ENCODE measurements at regions of chr9 and their contacts with region 1.

Region 1: GRCh38 chr9:5425006-5425628 is 12.6 kb downstream of the PLGRKT start:
- DNase-seq: peak in 3 of 14 experiments; percentile 61 to 67 (median 66)
- ATAC-seq: peak; percentile 74
- H3K4me3 ChIP-seq: no peak overlapping the region
- H3K4me3 Mint-ChIP-seq: no peak overlapping the region
- H3K27ac ChIP-seq: no peak overlapping the region
- H3K27ac Mint-ChIP-seq: no peak overlapping the region
- H3K4me1 ChIP-seq: no peaks in the 10 kb centered on the region
- H3K4me1 Mint-ChIP-seq: peaks cover 5% of the 10 kb centered on the region
- H3K27me3 ChIP-seq: no peaks in the 10 kb centered on the region
- H3K27me3 Mint-ChIP-seq: no peaks in the 10 kb centered on the region
- CTCF ChIP-seq: peak; percentile 79

Region 2: DNA sequence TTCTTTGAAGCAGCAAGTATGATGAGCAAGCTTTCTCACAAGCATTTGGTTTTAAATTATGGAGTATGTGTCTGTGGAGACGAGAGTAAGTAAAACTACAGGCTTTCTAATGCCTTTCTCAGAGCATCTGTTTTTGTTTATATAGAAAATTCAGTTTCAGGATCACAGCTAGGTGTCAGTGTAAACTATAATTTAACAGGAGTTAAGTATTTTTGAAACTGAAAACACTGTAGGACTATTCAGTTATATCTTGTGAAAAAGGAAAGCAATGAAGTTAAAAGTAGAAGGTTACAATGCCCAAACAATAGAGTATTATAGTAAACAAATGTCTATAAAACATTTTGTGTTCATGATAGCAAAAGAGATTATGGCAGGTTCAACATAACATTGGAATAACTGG is 351.4 kb before region 1 on chr9:
- CTCF ChIA-PET with region 1: no interaction called
- POLR2A ChIA-PET with region 1: no interaction called
- intact Hi-C with region 1: loop called in 1 of 2 experiments (anchors 10 kb)
- DNase-seq: no peak
- ATAC-seq: no peak
- H3K4me3 ChIP-seq: no peak overlapping the region
- H3K4me3 Mint-ChIP-seq: no peak overlapping the region
- H3K27ac ChIP-seq: no peak overlapping the region
- H3K27ac Mint-ChIP-seq: no peak overlapping the region
- H3K4me1 ChIP-seq: no peaks in the 10 kb centered on the region
- H3K4me1 Mint-ChIP-seq: no peaks in the 10 kb centered on the region
- H3K27me3 ChIP-seq: no peaks in the 10 kb centered on the region
- H3K27me3 Mint-ChIP-seq: no peaks in the 10 kb centered on the region
- CTCF ChIP-seq: no peak

Region 3: DNA sequence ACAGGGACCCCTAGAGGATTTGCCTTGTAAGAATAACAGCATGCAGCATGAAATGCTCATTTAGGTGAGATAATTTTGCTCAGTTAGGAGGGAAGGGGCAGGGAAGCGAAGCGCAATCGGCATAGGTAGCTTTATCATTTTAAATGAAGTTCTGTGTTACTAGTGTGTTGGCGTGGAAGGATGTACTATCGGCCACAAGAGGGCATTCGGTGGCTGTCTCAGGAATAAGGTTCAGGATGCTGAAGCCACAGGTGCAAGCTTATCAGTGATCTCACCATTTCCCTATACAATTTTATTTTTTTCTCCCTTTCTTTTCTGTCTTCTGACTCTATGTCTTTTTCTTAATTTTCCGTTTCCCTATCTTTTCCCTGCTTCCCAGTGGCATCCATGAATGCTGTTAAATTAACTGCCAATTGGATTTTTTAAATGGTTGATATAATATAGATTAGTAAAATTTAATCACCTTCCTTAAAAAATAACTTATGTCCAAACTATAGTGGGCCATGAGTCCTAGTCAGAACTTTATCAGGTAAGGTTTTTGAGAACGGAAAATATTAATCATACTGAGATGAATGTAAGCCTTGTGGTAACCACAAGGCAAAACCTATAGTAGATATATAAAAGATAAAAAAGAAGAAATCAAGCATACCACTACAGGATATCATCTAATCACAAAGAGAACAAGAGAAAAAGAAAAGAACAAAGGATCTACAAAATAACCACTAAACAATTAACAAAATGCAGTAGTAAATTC is 238.5 kb before region 1 on chr9:
- CTCF ChIA-PET with region 1: interaction called, 10 read pairs
- POLR2A ChIA-PET with region 1: interaction called, 3 read pairs
- intact Hi-C with region 1: loop called (anchors 1 kb)
- DNase-seq: peak; percentile 39 to 86 (median 54)
- ATAC-seq: peak; percentile 96
- H3K4me3 ChIP-seq: no peak overlapping the region
- H3K4me3 Mint-ChIP-seq: no peak overlapping the region
- H3K27ac ChIP-seq: no peak overlapping the region
- H3K27ac Mint-ChIP-seq: no peak overlapping the region
- H3K4me1 ChIP-seq: peaks cover 5% of the 10 kb centered on the region
- H3K4me1 Mint-ChIP-seq: peaks cover 12% of the 10 kb centered on the region
- H3K27me3 ChIP-seq: no peaks in the 10 kb centered on the region
- H3K27me3 Mint-ChIP-seq: no peaks in the 10 kb centered on the region
- CTCF ChIP-seq: peak; percentile 83

Measured in CD4-positive, alpha-beta T cell (primary cell).